A673 (cell line): ENCODE measurements at regions of chr11 and their contacts with region 1.

Region 1: DNA sequence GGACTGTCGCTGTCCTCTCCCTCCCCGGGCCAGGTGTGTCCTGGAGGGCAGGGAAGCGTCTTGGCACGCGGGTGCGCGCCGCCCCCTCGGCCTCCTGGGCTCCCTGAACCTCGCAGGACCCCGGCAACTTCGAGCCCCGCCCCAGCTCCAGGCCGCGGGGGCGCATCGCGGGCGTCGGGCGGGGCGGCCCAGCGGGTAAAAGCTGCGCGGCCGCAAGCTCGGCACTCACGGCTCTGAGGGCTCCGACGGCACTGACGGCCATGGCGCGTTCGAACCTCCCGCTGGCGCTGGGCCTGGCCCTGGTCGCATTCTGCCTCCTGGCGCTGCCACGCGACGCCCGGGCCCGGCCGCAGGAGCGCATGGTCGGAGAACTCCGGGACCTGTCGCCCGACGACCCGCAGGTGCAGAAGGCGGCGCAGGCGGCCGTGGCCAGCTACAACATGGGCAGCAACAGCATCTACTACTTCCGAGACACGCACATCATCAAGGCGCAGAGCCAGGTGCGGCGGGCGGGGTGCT is at the start of gene CST6:
- DNase-seq: no peak
- H3K4me3 ChIP-seq: no peak within 1 kb of the TSS
- H3K27ac ChIP-seq: no peak within 1 kb of the TSS
- H3K4me1 ChIP-seq: peaks cover 22% of the 10 kb centered on the region
- H3K27me3 ChIP-seq: no peaks in the 10 kb centered on the region
- CTCF ChIP-seq: no peak
- total RNA-seq, gene CST6: 2.3 and 3.9 TPM in 2 replicates

Region 2: DNA sequence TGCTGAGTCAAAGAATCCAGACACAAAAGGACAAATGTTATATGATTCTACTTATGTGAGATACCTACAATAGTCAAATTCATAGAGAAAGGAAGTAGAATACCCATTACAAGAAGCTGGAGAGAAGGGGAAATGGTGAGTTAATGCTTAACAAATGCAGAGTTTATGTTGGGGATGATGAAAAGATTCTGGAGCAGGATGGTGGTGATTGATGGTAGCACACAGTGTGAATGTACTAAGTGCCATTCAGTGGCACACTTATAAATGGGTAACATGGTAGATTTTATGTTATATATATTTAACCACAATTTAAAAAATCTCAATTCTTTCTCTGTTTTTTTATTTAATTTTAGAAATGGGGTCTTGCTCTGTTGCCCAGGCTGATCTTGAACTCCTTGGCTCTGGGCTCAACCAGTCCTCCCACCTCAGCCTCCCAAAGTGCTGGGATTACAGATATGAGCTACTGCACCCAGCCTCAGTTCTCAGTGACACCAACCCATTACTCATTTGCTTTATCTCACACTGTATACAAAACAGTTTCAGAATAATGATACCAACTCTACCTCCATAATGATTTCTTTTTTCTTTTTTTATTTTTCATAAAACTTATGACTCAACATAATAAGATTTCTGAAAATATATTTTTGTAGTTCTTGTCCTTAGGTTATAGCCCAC is 339.5 kb before region 1 on chr11:
- CTCF ChIA-PET with region 1: interaction called, 13 read pairs
- POLR2A ChIA-PET with region 1: no interaction called
- intact Hi-C with region 1: no loop called
- DNase-seq: no peak
- H3K4me3 ChIP-seq: no peak overlapping the region
- H3K27ac ChIP-seq: no peak overlapping the region
- H3K4me1 ChIP-seq: no peaks in the 10 kb centered on the region
- H3K27me3 ChIP-seq: no peaks in the 10 kb centered on the region
- CTCF ChIP-seq: no peak

Region 3: DNA sequence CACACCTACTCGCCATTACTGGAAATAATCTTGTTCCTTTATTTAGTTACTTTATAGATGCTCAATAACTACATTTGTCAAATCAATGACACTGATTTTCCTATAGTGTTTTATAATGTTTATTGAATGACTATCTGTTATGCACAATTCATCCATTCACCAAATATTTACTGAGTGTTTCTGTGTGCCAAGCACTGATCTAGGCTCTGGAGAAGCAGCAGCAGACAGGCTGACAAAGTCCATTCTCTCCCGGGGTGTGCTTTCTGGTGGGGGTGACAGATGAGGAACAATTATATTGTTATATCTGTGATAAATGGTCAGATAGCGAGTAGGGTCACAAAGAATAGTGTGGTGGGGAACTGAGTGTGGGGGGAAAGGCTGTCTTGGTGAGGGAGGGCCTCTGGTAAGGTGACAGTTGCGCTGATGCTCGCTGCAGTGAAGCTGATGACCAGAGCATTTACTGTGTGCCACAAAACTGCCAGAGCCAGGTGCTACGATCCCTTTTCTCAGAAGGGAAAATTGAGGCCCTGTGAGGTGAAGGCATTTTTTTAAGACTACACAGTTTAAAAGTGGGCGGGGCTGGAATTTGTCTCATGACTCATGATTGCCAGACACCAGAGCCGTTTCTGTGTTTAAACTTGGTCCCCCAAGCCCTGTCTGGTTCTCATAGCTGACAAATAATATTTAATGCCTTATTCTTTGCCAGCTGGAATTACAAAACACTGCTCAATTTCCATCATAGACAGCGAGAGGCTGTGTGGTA is 68.4 kb after region 1 on chr11:
- CTCF ChIA-PET with region 1: no interaction called
- POLR2A ChIA-PET with region 1: no interaction called
- intact Hi-C with region 1: no loop called
- DNase-seq: peak; percentile 69
- H3K4me3 ChIP-seq: no peak overlapping the region
- H3K27ac ChIP-seq: no peak overlapping the region
- H3K4me1 ChIP-seq: peaks cover 45% of the 10 kb centered on the region
- H3K27me3 ChIP-seq: no peaks in the 10 kb centered on the region
- CTCF ChIP-seq: no peak

Region 4: GRCh38 chr11:66100272-66101065 is 88.6 kb after region 1 on chr11:
- CTCF ChIA-PET with region 1: no interaction called
- POLR2A ChIA-PET with region 1: no interaction called
- intact Hi-C with region 1: no loop called
- DNase-seq: no peak
- H3K4me3 ChIP-seq: no peak overlapping the region
- H3K27ac ChIP-seq: peak overlapping the region; percentile 10
- H3K4me1 ChIP-seq: peaks cover 20% of the 10 kb centered on the region
- H3K27me3 ChIP-seq: no peaks in the 10 kb centered on the region
- CTCF ChIP-seq: no peak

Region 5: DNA sequence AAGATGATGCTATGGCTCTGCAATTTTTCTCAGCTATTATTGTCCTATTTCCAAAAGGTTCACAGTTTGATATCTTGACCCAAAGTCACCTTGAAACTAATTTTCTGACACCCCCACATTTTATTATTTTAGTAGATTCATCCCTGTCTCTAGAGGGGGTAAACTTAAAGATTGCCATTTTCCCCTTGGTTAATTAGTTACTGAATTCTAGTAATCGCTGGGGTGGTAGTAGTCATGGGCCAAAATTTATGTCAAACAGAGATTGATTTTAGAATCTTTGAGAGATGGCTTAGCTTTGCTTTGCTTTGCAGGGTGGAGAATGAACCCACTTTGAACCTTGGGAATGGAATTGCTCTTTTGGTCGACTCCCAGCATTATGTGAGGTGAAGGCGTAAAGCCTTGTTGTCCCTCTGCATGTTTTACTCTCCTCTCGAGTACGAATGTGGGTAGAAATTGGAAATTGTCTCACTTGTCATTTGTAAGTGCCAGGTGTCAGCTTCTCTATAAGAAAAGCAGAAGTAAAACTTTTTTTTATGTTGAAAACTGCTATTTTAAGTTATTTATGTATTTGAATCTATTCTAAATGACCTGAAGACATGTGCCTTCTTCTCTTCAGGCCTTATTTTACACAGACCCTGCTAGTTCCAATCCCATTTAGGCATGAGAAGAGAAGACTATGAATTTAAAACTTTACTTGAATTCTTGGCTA is 789.0 kb after region 1 on chr11:
- CTCF ChIA-PET with region 1: no interaction called
- POLR2A ChIA-PET with region 1: interaction called, 10 read pairs
- intact Hi-C with region 1: no loop called
- DNase-seq: no peak
- H3K4me3 ChIP-seq: no peak overlapping the region
- H3K27ac ChIP-seq: no peak overlapping the region
- H3K4me1 ChIP-seq: no peaks in the 10 kb centered on the region
- H3K27me3 ChIP-seq: no peaks in the 10 kb centered on the region
- CTCF ChIP-seq: no peak